Panc1 (cell line): ENCODE measurements at regions of chr10 and their contacts with region 1.

Region 1: GRCh38 chr10:95445837-95446486 is 115.2 kb downstream of the SORBS1 start:
- DNase-seq: peak; percentile 59
- ATAC-seq: peak; percentile 82
- H3K4me3 ChIP-seq: no peak overlapping the region
- H3K27ac ChIP-seq: peak overlapping the region; percentile 88
- H3K4me1 ChIP-seq: peaks cover 44% of the 10 kb centered on the region
- H3K27me3 ChIP-seq: no peaks in the 10 kb centered on the region
- CTCF ChIP-seq: peak; percentile 97

Region 2: DNA sequence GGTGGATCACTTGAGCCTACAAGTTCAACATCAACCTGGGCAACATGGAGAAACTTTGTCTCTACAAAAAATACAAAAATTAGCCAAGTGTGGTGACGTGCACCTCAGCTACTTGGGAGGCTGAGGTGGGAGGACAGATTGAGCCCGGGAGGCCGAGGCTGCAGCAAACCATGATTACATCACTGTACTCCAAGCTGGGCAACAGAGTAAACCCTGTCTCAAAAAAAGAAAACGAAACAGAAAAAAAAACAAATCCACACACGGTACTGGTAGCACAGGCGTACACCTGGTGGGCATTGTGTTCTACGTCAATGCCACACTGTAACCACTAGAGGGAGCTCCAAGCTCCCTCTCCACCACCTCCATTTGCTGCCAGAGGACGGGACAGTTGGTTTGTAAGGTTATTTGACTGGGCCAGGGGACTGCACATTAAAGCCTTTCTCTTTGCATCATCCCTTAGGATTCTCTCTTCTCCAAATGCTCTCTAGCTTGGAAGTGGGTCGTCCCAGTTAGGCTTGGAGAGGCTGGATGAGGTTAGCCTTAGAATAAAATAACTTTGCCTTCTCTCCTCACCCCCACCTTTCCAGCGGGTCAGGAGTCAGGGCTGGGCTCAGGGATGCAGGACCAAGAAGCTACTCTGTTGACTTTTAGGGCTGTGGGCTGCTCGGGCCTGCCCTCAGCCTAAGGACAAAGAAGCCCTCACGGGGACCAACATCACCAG is 15.6 kb before region 1 on chr10:
- CTCF ChIA-PET with region 1: interaction called, 10 read pairs
- POLR2A ChIA-PET with region 1: no interaction called
- in situ Hi-C with region 1: no loop called
- intact Hi-C with region 1: no loop called
- DNase-seq: peak; percentile 60
- ATAC-seq: peak; percentile 94
- H3K4me3 ChIP-seq: no peak overlapping the region
- H3K27ac ChIP-seq: peak overlapping the region; percentile 44; the same call in 1 of the 2 replicates
- H3K4me1 ChIP-seq: peaks cover 5% of the 10 kb centered on the region; the same call in 1 of the 2 replicates
- H3K27me3 ChIP-seq: no peaks in the 10 kb centered on the region
- CTCF ChIP-seq: peak; percentile 98